HCT116 (cell line): ENCODE measurements at regions of chr19 and their contacts with region 1.

Region 1: DNA sequence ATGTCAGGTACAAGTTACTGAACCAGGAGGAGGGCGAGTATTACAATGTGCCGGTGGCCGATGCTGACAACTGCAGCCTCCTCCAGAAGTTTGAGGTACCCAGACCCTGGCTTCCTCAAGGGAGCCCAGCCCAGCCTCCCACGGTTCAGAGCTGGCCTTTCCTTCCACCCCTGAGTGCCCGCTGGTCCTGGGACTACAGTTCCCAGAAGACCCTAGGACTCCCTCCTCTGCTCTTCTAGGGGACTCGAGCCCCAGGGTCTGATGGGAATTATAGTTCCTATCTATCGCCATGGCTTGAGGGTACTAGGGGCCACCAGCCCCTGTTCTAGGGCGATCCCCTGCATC is 11.0 kb downstream of the PRKCG start:
- DNase-seq: no peak
- ATAC-seq: no peak
- H3K4me3 ChIP-seq: no peak overlapping the region
- H3K27ac ChIP-seq: no peak overlapping the region
- H3K4me1 ChIP-seq: peaks cover 7 to 20% of the 10 kb centered on the region in 2 experiments; a peak in 3 of 4 replicates
- H3K27me3 ChIP-seq: no peaks in the 10 kb centered on the region
- CTCF ChIP-seq: no peak
- POLR2A ChIP-seq: no peak
- RAD21 ChIP-seq: no peak

Region 2: DNA sequence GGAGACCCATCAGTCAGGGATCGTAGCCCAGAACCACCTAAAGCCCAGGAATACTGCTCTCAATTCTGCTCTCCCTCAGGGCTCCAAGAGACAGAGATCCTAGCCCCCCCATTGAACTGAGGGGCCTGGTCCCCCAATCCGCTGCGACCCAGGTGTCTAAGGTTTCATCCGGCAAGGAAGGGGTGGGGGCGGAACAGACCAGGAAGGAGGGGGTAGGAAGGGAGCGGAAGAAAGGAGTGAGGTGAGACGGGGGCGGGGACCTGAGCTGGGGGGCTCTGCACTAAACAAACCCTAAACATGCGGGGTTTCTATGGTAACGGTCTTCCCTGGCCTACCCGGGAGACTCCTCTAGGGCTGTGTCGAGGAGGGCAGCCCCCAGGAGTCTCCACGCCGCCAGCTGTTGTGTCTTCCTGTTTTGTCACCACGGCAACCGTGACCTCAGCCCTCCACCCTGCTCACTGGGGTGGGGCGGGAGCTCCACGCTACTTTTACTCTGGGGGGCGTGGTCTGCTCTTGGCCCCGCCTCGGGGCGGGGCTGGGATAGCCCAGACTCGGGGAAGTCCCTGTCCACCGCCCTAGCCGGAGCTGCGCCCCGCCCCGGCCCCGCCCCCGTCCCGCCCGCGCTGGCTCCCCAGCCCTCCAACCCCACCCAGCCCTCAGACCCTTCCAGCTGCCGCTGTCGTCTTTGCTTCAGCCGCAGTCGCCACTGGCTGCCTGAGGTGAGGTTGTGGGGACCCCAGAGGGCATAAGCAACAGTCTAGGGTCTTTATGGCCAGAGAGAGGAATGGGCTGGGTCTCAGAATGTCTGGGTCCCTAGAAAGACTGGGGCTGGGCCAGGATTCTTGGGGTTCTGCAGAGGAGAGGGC is 25.5 kb before region 1 on chr19 and contains the start of gene MYADM:
- CTCF ChIA-PET with region 1: no interaction called
- POLR2A ChIA-PET with region 1: interaction called, 17 read pairs
- RAD21 ChIA-PET with region 1: no interaction called
- intact Hi-C with region 1: no loop called
- DNase-seq: peak; percentile 95
- ATAC-seq: peak; percentile 59
- H3K4me3 ChIP-seq: peak within 1 kb of the TSS; percentile 75 to 78
- H3K27ac ChIP-seq: peak within 1 kb of the TSS; percentile 80
- H3K4me1 ChIP-seq: peaks cover 18 to 47% of the 10 kb centered on the region in 2 experiments
- H3K27me3 ChIP-seq: no peaks in the 10 kb centered on the region
- CTCF ChIP-seq: no peak
- POLR2A ChIP-seq: peak; percentile 43
- RAD21 ChIP-seq: no peak
- total RNA-seq, gene MYADM: 79.6 TPM

Region 3: GRCh38 chr19:53912653-53913052 is 19.7 kb after region 1 on chr19:
- CTCF ChIA-PET with region 1: no interaction called
- POLR2A ChIA-PET with region 1: no interaction called
- RAD21 ChIA-PET with region 1: no interaction called
- intact Hi-C with region 1: no loop called
- DNase-seq: no peak
- ATAC-seq: peak; percentile 80
- H3K4me3 ChIP-seq: no peak overlapping the region
- H3K27ac ChIP-seq: no peak overlapping the region
- H3K4me1 ChIP-seq: no peaks in the 10 kb centered on the region
- H3K27me3 ChIP-seq: no peaks in the 10 kb centered on the region
- CTCF ChIP-seq: peak; percentile 10 to 67 (median 62); a peak in 4 of 6 replicates
- POLR2A ChIP-seq: no peak
- RAD21 ChIP-seq: peak; percentile 10; the same call in 1 of the 2 replicates

Region 4: DNA sequence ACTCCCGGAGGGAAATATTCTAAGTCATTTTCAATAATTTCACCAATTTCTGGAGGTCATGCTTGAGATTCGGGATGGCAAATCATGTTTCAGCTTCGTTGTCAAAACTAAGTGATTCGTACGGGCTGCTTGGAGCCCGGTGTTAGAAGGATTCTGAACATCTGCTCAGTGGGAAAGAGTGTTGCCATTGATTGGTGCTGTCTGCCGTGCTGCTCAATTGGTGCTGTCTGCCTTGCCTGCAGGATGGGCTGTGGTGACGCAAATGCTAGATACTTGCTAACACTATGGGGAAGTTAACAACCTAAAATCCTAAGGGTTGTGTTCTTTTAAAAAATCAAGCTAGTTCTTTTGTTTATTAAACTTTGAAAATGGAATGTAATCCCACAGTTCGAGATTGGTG is 52.5 kb after region 1 on chr19:
- CTCF ChIA-PET with region 1: no interaction called
- POLR2A ChIA-PET with region 1: no interaction called
- RAD21 ChIA-PET with region 1: no interaction called
- intact Hi-C with region 1: no loop called
- DNase-seq: peak; percentile 24
- ATAC-seq: peak; percentile 66
- H3K4me3 ChIP-seq: peak overlapping the region in 1 of 2 experiments; percentile 28; a peak in 2 of 4 replicates
- H3K27ac ChIP-seq: no peak overlapping the region
- H3K4me1 ChIP-seq: no peaks in the 10 kb centered on the region
- H3K27me3 ChIP-seq: no peaks in the 10 kb centered on the region
- CTCF ChIP-seq: no peak
- POLR2A ChIP-seq: no peak
- RAD21 ChIP-seq: 0 out of 2 replicates have a peak, but pooled peaks have one; percentile 3